ENCODE measurements at regions of chr14 and their contacts with region 1.

Region 1: GRCh38 chr14:56145965-56146364 is 27.8 kb downstream of the PELI2 start:
- DNase-seq: no peak
- H3K4me3 ChIP-seq: no peak overlapping the region
- H3K4me3 Mint-ChIP-seq: peak overlapping the region in 1 of 8 donors; percentile 1
- H3K27ac ChIP-seq: no peak overlapping the region
- H3K27ac Mint-ChIP-seq: no peak overlapping the region
- H3K4me1 ChIP-seq: peaks cover 20% of the 10 kb centered on the region
- H3K4me1 Mint-ChIP-seq: peaks cover 26 to 50% (median 36%) of the 10 kb centered on the region in 4 donors
- H3K27me3 ChIP-seq: no peaks in the 10 kb centered on the region
- H3K27me3 Mint-ChIP-seq: peaks cover 0 to 4% of the 10 kb centered on the region in 2 donors

Region 2: DNA sequence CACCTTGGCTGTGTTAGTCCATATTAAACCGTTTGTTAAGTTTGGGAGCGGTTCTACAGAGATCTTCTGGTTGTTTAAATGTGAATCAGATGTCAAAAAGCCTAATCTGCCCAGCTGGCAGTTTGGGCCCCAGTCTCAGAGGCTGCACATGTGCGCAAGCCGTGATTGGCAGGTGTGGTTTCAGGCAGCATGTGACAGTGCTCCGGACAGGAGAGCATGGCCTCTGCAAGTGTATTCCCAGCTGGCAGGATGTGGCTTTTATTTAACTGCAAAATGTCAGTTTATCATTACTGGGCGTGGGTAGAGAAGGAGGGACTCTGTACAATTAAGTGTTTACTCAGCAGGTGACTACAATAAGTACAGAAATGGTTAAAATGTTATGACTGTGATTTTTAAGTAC is 49.7 kb after region 1 on chr14:
- CTCF ChIA-PET with region 1: no interaction called
- POLR2A ChIA-PET with region 1: no interaction called
- intact Hi-C with region 1: loop called (anchors 10 kb)
- DNase-seq: peak in 1 of 5 donors; percentile 18
- H3K4me3 ChIP-seq: no peak overlapping the region
- H3K4me3 Mint-ChIP-seq: peak overlapping the region in 6 of 8 donors; percentile 1 to 68 (median 24)
- H3K27ac ChIP-seq: no peak overlapping the region
- H3K27ac Mint-ChIP-seq: peak overlapping the region; percentile 4 to 82 (median 49)
- H3K4me1 ChIP-seq: peaks cover 15% of the 10 kb centered on the region
- H3K4me1 Mint-ChIP-seq: peaks cover 18 to 30% (median 23%) of the 10 kb centered on the region in 4 donors
- H3K27me3 ChIP-seq: no peaks in the 10 kb centered on the region
- H3K27me3 Mint-ChIP-seq: no peaks in the 10 kb centered on the region